CD4-positive, alpha-beta T cell (primary cell): ENCODE measurements at regions of chr1 and their contacts with region 1.

Region 1: GRCh38 chr1:155250633-155251449 is 4.4 kb downstream of the ENTREP3 start:
- DNase-seq: peak; percentile 93 to 98 (median 96)
- ATAC-seq: peak; percentile 96
- H3K4me3 ChIP-seq: peak overlapping the region; percentile 60
- H3K4me3 Mint-ChIP-seq: peak overlapping the region; percentile 67
- H3K27ac ChIP-seq: no peak overlapping the region
- H3K27ac Mint-ChIP-seq: peak overlapping the region; percentile 16
- H3K4me1 ChIP-seq: peaks cover 37% of the 10 kb centered on the region
- H3K4me1 Mint-ChIP-seq: peaks cover 23% of the 10 kb centered on the region
- H3K27me3 ChIP-seq: no peaks in the 10 kb centered on the region
- H3K27me3 Mint-ChIP-seq: no peaks in the 10 kb centered on the region
- CTCF ChIP-seq: peak; percentile 100

Region 2: GRCh38 chr1:155208541-155209311 is 42.1 kb before region 1 on chr1 and contains the start of gene MTX1:
- CTCF ChIA-PET with region 1: interaction called, 12 read pairs
- POLR2A ChIA-PET with region 1: interaction called, 3 read pairs
- intact Hi-C with region 1: no loop called
- DNase-seq: peak; percentile 73 to 95 (median 86)
- ATAC-seq: peak; percentile 80
- H3K4me3 ChIP-seq: peak within 1 kb of the TSS; percentile 69
- H3K4me3 Mint-ChIP-seq: peak within 1 kb of the TSS; percentile 94
- H3K27ac ChIP-seq: peak within 1 kb of the TSS; percentile 99 to 100
- H3K27ac Mint-ChIP-seq: peak within 1 kb of the TSS; percentile 96
- H3K4me1 ChIP-seq: peaks cover 30% of the 10 kb centered on the region
- H3K4me1 Mint-ChIP-seq: peaks cover 31% of the 10 kb centered on the region
- H3K27me3 ChIP-seq: no peaks in the 10 kb centered on the region
- H3K27me3 Mint-ChIP-seq: no peaks in the 10 kb centered on the region
- CTCF ChIP-seq: no peak
- total RNA-seq, gene MTX1: 19.9 to 20.7 TPM

Region 3: GRCh38 chr1:155267373-155267772 is 16.5 kb after region 1 on chr1:
- CTCF ChIA-PET with region 1: interaction called, 47 read pairs
- POLR2A ChIA-PET with region 1: interaction called, 40 read pairs
- intact Hi-C with region 1: loop called in 1 of 2 experiments (anchors 2 kb)
- DNase-seq: no peak
- ATAC-seq: no peak
- H3K4me3 ChIP-seq: no peak overlapping the region
- H3K4me3 Mint-ChIP-seq: no peak overlapping the region
- H3K27ac ChIP-seq: no peak overlapping the region
- H3K27ac Mint-ChIP-seq: no peak overlapping the region
- H3K4me1 ChIP-seq: peaks cover 21% of the 10 kb centered on the region
- H3K4me1 Mint-ChIP-seq: peaks cover 28% of the 10 kb centered on the region
- H3K27me3 ChIP-seq: no peaks in the 10 kb centered on the region
- H3K27me3 Mint-ChIP-seq: no peaks in the 10 kb centered on the region
- CTCF ChIP-seq: no peak

Region 4: DNA sequence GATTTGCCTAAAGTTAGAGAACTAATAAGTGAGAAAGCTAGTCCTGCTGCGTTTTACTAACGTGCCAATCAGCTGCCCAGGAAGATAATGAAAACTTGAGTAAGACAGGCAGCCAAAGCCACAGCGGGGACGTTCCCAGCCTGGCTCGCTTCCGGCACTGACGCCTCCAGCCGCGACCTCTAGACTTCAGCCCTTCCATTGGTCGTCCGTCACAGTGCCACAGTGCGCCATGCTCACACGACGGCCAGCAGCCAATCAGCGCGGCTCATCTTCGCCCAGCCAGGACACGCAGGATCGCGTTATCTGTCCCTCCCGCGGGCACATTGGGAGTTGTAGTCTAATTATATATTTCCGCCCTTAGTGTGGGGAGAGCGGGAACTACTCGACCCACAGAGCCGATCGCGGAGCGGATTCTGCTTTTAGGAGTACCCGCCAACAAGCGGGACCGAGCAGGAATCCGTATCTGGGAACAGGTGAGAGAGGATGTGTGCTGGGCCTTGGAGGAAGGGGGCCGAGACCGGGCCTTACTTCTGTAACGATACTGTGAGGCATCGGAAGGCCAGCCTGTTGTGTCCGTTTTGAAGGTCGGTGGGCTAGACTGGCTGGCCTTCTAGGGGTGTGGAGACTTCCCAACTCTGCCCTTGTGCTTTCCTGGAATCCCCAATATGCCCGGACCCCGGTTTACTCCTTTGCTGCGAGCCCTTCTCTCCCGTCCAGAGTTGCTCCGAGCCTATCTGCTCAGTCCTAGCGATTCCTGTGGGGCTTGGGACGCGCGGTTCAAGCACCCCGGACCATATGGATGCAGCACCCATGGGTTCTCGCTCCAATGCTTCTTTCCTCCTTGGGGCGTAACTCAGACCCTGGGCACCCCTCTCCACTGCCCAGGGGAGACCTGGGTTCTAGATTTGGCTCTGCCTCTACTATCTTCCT is 57.9 kb after region 1 on chr1 and contains the start of gene FDPS:
- CTCF ChIA-PET with region 1: interaction called, 15 read pairs
- POLR2A ChIA-PET with region 1: interaction called, 5 read pairs
- intact Hi-C with region 1: loop called in 1 of 2 experiments (anchors 2 kb)
- DNase-seq: peak; percentile 90 to 100 (median 94)
- ATAC-seq: peak; percentile 97
- H3K4me3 ChIP-seq: peak within 1 kb of the TSS; percentile 93
- H3K4me3 Mint-ChIP-seq: peak within 1 kb of the TSS; percentile 94
- H3K27ac ChIP-seq: peak within 1 kb of the TSS; percentile 92 to 95
- H3K27ac Mint-ChIP-seq: peak within 1 kb of the TSS; percentile 96
- H3K4me1 ChIP-seq: peaks cover 29% of the 10 kb centered on the region
- H3K4me1 Mint-ChIP-seq: peaks cover 28% of the 10 kb centered on the region
- H3K27me3 ChIP-seq: no peaks in the 10 kb centered on the region
- H3K27me3 Mint-ChIP-seq: no peaks in the 10 kb centered on the region
- CTCF ChIP-seq: no peak
- total RNA-seq, gene FDPS: 44.0 to 47.3 TPM

Region 5: DNA sequence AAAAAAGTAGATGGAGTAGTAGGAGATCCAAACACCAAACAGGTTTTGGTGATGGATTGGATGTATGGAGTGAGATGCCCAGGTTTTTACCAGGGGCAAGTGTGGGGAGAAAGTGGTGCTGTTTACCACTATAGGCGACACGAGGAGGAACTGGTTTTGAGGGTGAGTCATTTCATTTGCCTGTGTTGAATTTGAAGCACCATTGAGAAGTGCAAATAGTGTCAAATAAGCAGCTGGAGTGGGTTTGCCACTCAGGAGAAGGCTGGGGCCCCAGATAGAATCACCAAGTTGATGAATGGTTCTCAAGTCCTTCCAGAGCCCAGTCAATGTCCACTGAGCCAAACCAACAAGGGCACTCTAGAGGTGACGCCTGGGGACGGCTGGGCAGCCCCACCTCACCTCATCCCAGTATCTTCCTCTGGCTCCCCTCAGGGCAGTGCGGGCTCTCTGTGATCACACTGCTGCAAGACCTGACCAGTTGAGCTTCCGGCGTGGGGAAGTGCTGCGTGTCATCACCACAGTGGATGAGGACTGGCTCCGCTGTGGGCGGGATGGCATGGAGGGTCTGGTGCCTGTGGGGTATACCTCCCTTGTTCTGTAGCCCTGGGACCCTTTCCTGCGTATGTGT is 79.2 kb after region 1 on chr1:
- CTCF ChIA-PET with region 1: interaction called, 114 read pairs
- POLR2A ChIA-PET with region 1: no interaction called
- intact Hi-C with region 1: no loop called
- DNase-seq: no peak
- ATAC-seq: no peak
- H3K4me3 ChIP-seq: no peak overlapping the region
- H3K4me3 Mint-ChIP-seq: no peak overlapping the region
- H3K27ac ChIP-seq: no peak overlapping the region
- H3K27ac Mint-ChIP-seq: no peak overlapping the region
- H3K4me1 ChIP-seq: peaks cover 6% of the 10 kb centered on the region
- H3K4me1 Mint-ChIP-seq: peaks cover 13% of the 10 kb centered on the region
- H3K27me3 ChIP-seq: no peaks in the 10 kb centered on the region
- H3K27me3 Mint-ChIP-seq: no peaks in the 10 kb centered on the region
- CTCF ChIP-seq: no peak

Region 6: DNA sequence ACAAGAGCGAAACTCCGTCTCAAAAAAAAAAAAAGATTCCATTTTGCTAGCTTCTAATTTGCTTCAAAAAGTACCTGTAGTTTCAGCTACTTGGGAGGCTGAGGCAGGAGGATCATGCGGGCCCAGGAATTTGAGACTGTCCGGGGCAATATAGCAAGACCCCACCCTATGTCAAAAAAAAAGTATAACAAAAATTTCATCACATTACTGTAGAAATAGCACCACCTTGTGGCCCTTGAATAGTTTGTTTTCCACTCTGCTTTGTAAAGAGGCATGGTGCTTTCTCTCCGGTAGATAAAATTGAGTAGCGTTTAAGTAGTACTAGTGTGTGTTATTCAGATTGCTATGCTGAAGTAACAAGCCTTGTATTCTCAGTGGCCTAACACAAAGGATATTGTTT is 340.9 kb after region 1 on chr1:
- CTCF ChIA-PET with region 1: interaction called, 7 read pairs
- POLR2A ChIA-PET with region 1: interaction called, 3 read pairs
- intact Hi-C with region 1: loop called (anchors 1 kb)
- DNase-seq: peak in 6 of 14 experiments; percentile 7 to 78 (median 64)
- ATAC-seq: peak; percentile 72
- H3K4me3 ChIP-seq: no peak overlapping the region
- H3K4me3 Mint-ChIP-seq: no peak overlapping the region
- H3K27ac ChIP-seq: no peak overlapping the region
- H3K27ac Mint-ChIP-seq: no peak overlapping the region
- H3K4me1 ChIP-seq: no peaks in the 10 kb centered on the region
- H3K4me1 Mint-ChIP-seq: peaks cover 5% of the 10 kb centered on the region
- H3K27me3 ChIP-seq: no peaks in the 10 kb centered on the region
- H3K27me3 Mint-ChIP-seq: no peaks in the 10 kb centered on the region
- CTCF ChIP-seq: peak; percentile 63